ENCODE measurements at regions of chr6 and their contacts with region 1.

Region 1: GRCh38 chr6:31068669-31069340 is 43.6 kb downstream of the C6orf15 start:
- DNase-seq: peak; percentile 86
- ATAC-seq: peak; percentile 86

Region 2: DNA sequence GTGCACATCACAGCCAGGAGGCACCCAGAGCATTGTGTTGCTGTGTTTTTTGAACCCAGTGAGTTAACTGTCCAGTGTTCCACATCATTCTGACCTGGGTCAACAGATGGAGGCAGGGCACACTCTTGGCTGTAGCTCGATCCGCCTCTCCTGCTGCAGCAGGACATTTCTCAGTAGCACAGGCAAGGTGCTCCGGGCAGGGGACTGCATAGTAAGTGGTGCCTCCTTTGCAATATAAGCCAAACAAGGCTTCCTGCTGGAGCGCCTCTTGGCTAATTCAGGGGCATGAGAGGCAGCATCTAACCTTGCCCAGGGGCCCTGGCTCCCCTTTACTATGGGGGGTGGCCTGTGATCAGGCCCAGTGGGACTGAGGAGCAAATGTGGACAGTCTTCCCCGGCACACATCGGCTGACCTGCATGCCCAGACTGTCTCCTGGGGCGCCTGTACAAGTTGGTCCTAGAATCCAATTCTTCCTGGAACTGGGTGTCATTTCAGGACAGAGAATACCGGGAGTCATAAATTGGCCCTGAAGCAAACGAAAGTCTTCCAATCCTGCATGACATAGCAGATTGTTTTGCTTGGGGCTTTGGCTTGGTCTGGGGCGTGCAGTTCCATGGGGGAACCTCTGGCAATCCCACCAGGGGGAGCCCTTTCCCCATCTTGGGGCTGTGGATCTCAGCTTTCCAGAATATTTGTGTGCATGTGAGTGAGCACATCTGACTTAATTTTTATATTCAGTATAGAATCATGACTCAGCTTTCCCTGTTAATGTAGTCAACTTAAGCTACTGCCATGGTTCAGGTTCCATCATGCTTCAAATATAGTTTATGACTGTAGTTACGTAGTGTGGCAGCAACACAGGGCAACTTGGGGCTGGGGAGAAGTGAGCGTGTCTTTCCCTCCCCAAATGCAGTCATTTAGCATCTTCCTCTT is 240.5 kb before region 1 on chr6:
- intact Hi-C with region 1: loop called (anchors 5 kb)
- DNase-seq: peak; percentile 96
- ATAC-seq: peak; percentile 95

Region 3: DNA sequence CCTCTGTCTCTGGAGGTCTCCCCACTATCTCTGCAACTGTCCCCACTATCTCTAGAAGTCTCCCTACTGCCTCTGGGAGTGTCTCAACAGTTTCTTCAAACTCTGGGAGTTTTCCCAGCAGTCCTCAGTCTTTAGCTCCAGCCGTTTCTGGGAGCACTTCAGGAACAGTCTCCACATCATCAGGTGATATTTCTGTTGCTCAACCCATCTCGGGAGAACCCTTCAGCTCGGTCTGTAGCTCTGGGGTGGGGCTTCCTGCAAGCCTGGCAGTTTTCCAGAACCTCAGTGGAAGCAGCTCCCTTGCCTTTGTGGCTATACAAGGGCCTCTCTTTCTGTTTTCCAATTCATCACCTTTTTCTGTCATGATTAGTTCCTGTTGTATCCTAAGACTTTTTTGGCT is 133.8 kb before region 1 on chr6:
- intact Hi-C with region 1: loop called (anchors 10 kb)
- DNase-seq: no peak
- ATAC-seq: no peak

Region 4: DNA sequence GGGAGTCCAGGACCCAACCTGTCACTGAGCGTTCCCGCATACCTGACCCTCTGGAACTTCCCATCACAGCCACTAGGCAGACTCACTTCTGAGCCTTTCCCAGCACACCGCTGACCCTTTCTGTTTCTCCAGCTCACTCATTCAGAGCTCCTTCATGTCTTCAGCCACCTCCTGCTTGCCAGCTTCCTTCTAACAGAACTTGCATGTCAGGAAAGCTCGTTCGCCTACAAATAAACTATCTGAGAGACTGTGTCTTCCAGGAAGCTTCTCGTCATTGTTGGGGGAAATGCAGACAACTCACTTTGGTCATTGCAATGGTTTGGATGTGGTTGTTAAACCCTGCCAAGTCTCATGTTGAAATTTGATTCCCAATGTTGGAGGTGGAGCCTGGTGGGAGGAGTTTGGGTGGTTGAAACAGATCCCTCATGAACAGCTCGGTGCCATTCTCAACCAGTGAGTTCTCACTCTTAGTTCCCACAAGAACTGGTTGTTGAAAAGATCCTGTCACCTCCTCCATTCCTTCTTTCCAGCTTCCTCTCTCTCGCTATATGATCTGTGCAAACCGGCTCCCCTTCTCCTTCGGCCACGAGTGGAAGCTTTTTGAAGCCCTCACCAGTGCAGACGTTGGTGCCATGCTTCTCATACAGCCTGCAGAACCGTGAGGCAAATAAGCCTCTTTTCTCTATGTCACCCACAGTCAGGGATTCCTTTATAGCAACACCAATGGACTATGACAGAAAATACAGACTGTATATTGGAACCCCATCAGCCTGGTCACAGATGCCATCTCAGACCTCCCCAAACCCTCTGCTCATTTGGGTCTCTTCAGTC is 86.6 kb before region 1 on chr6:
- intact Hi-C with region 1: no loop called
- DNase-seq: no peak
- ATAC-seq: peak; percentile 65